ENCODE measurements at regions of chr3 and their contacts with region 1.

Region 1: GRCh38 chr3:56962206-56962605 is 98.3 kb upstream of the SPATA12 start:
- DNase-seq: no peak
- ATAC-seq: no peak
- H3K4me3 ChIP-seq: no peak overlapping the region
- H3K4me3 Mint-ChIP-seq: no peak overlapping the region
- H3K27ac ChIP-seq: no peak overlapping the region
- H3K27ac Mint-ChIP-seq: no peak overlapping the region
- H3K4me1 ChIP-seq: no peaks in the 10 kb centered on the region
- H3K4me1 Mint-ChIP-seq: peaks cover 0 to 2% (median 0%) of the 10 kb centered on the region in 3 donors
- H3K27me3 ChIP-seq: no peaks in the 10 kb centered on the region
- H3K27me3 Mint-ChIP-seq: no peaks in the 10 kb centered on the region

Region 2: DNA sequence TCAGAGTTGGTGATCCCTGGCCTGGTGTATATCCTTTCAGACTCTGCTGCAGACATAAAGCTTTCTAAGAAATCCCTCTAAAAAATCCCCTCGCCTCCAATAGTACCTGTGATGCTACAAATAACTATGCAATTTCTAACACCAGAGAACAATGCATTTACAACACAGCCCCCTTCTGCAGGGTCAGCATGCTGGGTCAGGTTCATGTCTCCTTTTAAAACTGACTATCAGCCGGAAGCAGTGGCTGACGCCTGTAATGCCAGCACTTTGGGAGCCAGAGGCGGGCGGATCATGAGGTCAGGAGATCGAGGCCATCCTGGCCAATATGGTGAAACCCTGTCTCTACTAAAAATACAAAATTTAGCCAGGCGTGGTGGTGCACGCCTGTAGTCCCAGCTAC is 21.2 kb after region 1 on chr3:
- CTCF ChIA-PET with region 1: interaction called, 6 to 11 read pairs
- POLR2A ChIA-PET with region 1: no interaction called
- DNase-seq: no peak
- ATAC-seq: no peak
- H3K4me3 ChIP-seq: no peak overlapping the region
- H3K4me3 Mint-ChIP-seq: no peak overlapping the region
- H3K27ac ChIP-seq: no peak overlapping the region
- H3K27ac Mint-ChIP-seq: no peak overlapping the region
- H3K4me1 ChIP-seq: peaks cover 0 to 9% of the 10 kb centered on the region in 2 experiments
- H3K4me1 Mint-ChIP-seq: peaks cover 10 to 21% (median 16%) of the 10 kb centered on the region in 3 donors
- H3K27me3 ChIP-seq: no peaks in the 10 kb centered on the region
- H3K27me3 Mint-ChIP-seq: no peaks in the 10 kb centered on the region

Region 3: GRCh38 chr3:57227930-57228751 is 265.9 kb after region 1 on chr3:
- CTCF ChIA-PET with region 1: no interaction called
- POLR2A ChIA-PET with region 1: no interaction called
- DNase-seq: peak in 34 of 35 experiments; percentile 4 to 66 (median 23)
- ATAC-seq: peak; percentile 57 to 68 (median 63)
- H3K4me3 ChIP-seq: peak overlapping the region; percentile 61 to 88
- H3K4me3 Mint-ChIP-seq: peak overlapping the region; percentile 89 to 91 (median 90)
- H3K27ac ChIP-seq: no peak overlapping the region
- H3K27ac Mint-ChIP-seq: peak overlapping the region; percentile 16 to 66
- H3K4me1 ChIP-seq: peaks cover 11 to 16% of the 10 kb centered on the region in 2 experiments
- H3K4me1 Mint-ChIP-seq: peaks cover 22 to 38% (median 36%) of the 10 kb centered on the region in 3 donors
- H3K27me3 ChIP-seq: no peaks in the 10 kb centered on the region
- H3K27me3 Mint-ChIP-seq: no peaks in the 10 kb centered on the region